Head of caudate nucleus (tissue), 42 donors: ENCODE measurements at regions of chr17 and their contacts with region 1.

Region 1: DNA sequence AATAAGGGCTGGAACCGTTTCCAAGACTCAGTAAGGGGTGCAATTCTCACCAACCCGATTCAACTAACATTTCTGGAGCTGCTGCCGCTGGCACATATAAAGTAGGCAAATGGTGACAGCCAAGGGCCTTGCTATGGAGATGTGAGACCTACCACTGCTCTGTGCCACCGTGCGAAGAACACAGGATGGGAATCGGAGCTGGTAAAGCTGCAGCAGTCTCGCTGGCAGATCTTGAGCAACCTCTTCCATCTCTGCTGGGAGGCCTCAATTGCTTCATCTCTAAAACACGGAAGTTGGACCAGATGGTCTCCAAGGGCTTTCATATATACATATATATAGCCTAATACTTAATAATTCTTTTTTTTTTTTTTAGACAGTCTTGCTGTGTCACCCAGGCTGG is 128.9 kb upstream of the RCVRN start:
- DNase-seq: peak in 1 of 42 donors; percentile 67

Region 2: GRCh38 chr17:10072561-10073385 is 38.8 kb after region 1 on chr17:
- intact Hi-C with region 1: no loop called
- DNase-seq: no peak

Region 3: DNA sequence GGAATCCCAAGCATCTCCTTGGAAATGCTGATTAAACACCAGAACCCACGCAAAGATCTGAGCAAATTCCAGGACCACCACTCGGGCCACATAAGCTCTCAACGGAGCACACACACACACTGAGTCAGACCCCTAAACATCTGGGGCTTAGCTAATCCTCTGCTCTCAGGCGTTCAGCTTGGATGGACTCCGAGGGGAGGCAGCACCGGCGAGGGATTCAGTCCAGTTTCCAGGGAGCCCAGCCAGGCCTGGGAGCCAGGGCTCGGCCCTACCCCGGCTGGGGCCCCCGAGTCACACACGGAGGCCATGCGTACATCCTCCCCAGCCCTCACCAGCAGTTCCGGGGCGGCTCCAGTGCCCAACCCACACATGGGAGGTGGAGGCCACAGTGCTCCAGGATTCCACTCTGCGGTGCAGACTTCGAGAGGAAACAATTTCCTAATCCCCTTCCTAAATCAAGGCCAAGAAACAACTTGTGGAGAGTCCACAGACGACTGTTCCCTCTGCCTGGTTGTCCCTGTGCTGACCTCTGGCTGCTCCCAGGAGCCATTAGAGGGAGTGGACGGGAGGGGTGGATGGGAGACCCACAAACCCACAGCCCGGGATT is 94.0 kb after region 1 on chr17:
- intact Hi-C with region 1: loop called (anchors 5 kb)
- DNase-seq: peak in 36 of 42 donors; percentile 27 to 87 (median 62)